ENCODE measurements at regions of chr16 and their contacts with region 1.

Region 1: DNA sequence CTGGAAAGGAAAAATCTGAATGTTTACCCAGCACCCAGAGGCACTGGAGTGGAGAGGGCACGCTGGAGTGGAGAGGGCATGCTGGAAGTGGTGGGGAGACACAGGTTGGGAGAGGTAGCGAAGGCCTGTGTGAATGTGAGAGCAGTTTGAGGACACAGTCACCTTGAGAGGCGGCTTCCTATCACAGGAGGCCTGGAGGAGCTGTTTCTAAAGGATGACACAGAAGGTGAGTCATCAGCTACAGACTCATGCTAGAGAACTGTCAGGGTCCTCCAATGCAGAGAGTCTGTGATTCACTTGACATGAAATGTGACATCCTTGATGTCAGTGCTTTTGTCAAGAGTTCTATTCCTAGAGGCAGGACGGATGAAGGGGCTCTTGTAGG is 13.8 kb downstream of the CTRL start:
- DNase-seq: peak; percentile 81
- H3K4me3 Mint-ChIP-seq: no peak overlapping the region
- H3K27ac Mint-ChIP-seq: peak overlapping the region; percentile 89
- H3K4me1 Mint-ChIP-seq: peaks cover 38% of the 10 kb centered on the region
- H3K27me3 Mint-ChIP-seq: no peaks in the 10 kb centered on the region

Region 2: DNA sequence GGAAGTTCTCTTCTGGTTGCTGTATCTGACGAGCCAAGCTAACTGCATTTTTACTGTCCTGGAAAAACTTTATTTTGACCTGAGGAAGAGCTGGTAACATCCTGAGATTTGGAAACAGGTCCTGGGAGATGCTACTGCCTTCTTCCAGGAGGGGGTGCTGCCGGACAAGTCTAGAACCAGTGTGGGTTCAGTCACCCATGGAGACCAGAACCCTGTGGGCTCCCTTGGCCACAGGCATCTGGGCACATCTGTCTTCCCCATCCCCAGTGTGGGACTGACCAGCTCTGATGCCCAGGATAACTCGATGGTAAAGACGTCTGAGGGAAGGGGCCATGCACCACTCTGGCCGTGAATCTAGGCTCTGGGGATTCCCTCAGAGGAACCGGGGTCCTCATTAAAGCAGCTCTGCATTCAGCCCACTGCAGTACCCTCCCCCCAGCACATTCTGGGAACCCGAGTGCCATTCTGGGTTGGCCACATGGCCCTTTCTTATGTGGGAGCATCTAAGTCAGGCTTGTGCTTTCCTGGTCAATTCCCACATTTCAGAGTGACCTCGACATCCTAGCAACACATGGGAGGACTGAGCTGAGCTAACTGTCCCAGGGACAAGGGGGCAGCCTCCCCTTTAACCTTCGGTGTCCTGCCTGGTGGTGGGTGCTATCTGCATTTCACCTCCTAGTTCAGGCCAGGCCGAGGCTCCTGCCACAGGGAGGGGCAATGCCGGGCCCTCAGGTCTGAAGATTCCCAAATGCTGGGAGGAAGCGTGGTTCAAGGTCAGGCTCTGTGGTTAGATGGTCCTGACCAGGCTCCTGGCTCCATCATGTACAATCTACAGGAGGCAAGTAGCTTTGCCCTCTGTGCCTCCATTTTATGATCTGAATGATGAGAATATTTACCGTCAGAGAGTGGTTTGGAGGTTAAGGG is 244.8 kb before region 1 on chr16:
- CTCF ChIA-PET with region 1: interaction called, 3 read pairs
- intact Hi-C with region 1: loop called (anchors 2 kb)
- DNase-seq: peak; percentile 74
- H3K4me3 Mint-ChIP-seq: no peak overlapping the region
- H3K27ac Mint-ChIP-seq: no peak overlapping the region
- H3K4me1 Mint-ChIP-seq: peaks cover under 1% of the 10 kb centered on the region
- H3K27me3 Mint-ChIP-seq: no peaks in the 10 kb centered on the region

Region 3: GRCh38 chr16:68190736-68191510 is 273.1 kb after region 1 on chr16:
- CTCF ChIA-PET with region 1: no interaction called
- intact Hi-C with region 1: no loop called
- DNase-seq: no peak
- H3K4me3 Mint-ChIP-seq: no peak overlapping the region
- H3K27ac Mint-ChIP-seq: no peak overlapping the region
- H3K4me1 Mint-ChIP-seq: peaks cover 2% of the 10 kb centered on the region
- H3K27me3 Mint-ChIP-seq: no peaks in the 10 kb centered on the region